Heart right ventricle (tissue), 16 donors: ENCODE measurements at regions of chr11 and their contacts with region 1.

Region 1: DNA sequence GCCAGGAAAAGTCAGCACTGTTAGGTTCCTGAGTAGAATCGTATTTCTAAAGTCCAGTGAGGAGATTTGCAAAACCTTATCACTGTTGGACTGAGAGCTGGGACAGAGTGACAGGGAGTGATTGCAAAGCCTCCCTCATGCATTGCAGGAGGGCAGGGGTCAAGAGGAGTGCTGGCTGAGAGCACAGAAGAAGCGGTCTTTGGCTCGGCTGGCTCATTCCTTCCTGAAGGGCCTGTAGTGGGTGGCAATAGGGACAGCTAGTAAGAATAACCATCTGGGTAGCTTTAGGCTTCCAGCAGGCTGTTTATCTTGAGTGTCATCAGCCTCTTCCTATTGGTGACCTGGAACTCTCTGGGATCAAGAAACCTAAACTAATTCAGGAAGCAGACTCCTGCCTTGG is 53.4 kb downstream of the CD44 start:
- DNase-seq: peak; percentile 53 to 58
- ATAC-seq: peak; percentile 81 to 96 (median 88)
- H3K4me3 ChIP-seq: no peak overlapping the region
- H3K27ac ChIP-seq: peak overlapping the region in 8 of 10 donors; percentile 11 to 75 (median 42)
- H3K4me1 ChIP-seq: peaks cover 2 to 78% (median 27%) of the 10 kb centered on the region in 9 donors
- H3K27me3 ChIP-seq: no peaks in the 10 kb centered on the region
- CTCF ChIP-seq: no peak

Region 2: GRCh38 chr11:33959855-33960400 is 1232.4 kb before region 1 on chr11:
- intact Hi-C with region 1: loop called in 1 of 10 experiments (anchors 5 kb)
- DNase-seq: no peak
- ATAC-seq: no peak
- H3K4me3 ChIP-seq: no peak overlapping the region
- H3K27ac ChIP-seq: no peak overlapping the region
- H3K4me1 ChIP-seq: peaks cover 0 to 11% (median 0%) of the 10 kb centered on the region in 9 donors
- H3K27me3 ChIP-seq: no peaks in the 10 kb centered on the region
- CTCF ChIP-seq: no peak

Region 3: GRCh38 chr11:35313066-35313759 is 120.9 kb after region 1 on chr11:
- intact Hi-C with region 1: loop called in 1 of 10 experiments (anchors 10 kb)
- DNase-seq: no peak
- ATAC-seq: peak in 5 of 8 donors; percentile 39 to 64 (median 54)
- H3K4me3 ChIP-seq: no peak overlapping the region
- H3K27ac ChIP-seq: peak overlapping the region in 1 of 10 donors; percentile 69
- H3K4me1 ChIP-seq: peaks cover 0 to 42% (median 10%) of the 10 kb centered on the region in 9 donors
- H3K27me3 ChIP-seq: no peaks in the 10 kb centered on the region
- CTCF ChIP-seq: no peak